ENCODE measurements at regions of chr2 and their contacts with region 1.

Region 1: DNA sequence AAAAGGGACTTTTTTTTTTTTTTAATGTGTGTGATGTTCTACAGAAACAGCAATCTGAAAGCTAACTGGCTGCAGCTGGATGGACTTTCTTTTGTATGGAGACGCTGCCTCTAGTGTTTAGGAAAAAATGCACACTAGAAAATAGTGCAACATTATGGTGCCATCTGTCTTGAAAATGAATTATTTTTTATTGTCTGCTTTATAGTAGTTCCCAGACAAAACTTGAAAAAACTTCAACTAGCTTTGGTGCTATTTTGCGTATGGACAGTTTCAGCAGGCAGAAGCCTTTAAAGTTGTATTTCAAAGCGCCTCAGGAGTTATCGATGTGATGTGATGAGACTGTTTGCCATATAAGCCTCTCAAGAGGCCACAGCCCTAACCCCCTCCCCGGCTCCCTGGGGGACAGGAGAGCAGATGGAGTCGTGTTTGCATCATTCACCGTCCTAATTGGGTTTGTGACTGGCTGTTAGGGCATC is 86.9 kb downstream of the LTBP1 start:
- DNase-seq: no peak
- H3K4me3 ChIP-seq: no peak overlapping the region
- H3K27ac ChIP-seq: no peak overlapping the region
- H3K4me1 ChIP-seq: no peaks in the 10 kb centered on the region
- H3K27me3 ChIP-seq: no peaks in the 10 kb centered on the region
- CTCF ChIP-seq: peak; percentile 69

Region 2: GRCh38 chr2:32553829-32554432 is 479.7 kb before region 1 on chr2:
- CTCF ChIA-PET with region 1: no interaction called
- POLR2A ChIA-PET with region 1: no interaction called
- intact Hi-C with region 1: loop called (anchors 5 kb)
- DNase-seq: no peak
- H3K4me3 ChIP-seq: no peak overlapping the region
- H3K27ac ChIP-seq: no peak overlapping the region
- H3K4me1 ChIP-seq: no peaks in the 10 kb centered on the region
- H3K27me3 ChIP-seq: no peaks in the 10 kb centered on the region
- CTCF ChIP-seq: peak; percentile 85

Region 3: GRCh38 chr2:32946314-32947075 is 87.1 kb before region 1 on chr2 and contains the start of gene LTBP1:
- CTCF ChIA-PET with region 1: no interaction called
- POLR2A ChIA-PET with region 1: no interaction called
- intact Hi-C with region 1: loop called (anchors 1 kb)
- DNase-seq: peak; percentile 62 to 68
- H3K4me3 ChIP-seq: peak within 1 kb of the TSS; percentile 77
- H3K27ac ChIP-seq: no peak within 1 kb of the TSS
- H3K4me1 ChIP-seq: peaks cover 10% of the 10 kb centered on the region
- H3K27me3 ChIP-seq: no peaks in the 10 kb centered on the region
- CTCF ChIP-seq: peak; percentile 88
- total RNA-seq, gene LTBP1: 10.3 and 10.4 TPM in 2 replicates

Region 4: DNA sequence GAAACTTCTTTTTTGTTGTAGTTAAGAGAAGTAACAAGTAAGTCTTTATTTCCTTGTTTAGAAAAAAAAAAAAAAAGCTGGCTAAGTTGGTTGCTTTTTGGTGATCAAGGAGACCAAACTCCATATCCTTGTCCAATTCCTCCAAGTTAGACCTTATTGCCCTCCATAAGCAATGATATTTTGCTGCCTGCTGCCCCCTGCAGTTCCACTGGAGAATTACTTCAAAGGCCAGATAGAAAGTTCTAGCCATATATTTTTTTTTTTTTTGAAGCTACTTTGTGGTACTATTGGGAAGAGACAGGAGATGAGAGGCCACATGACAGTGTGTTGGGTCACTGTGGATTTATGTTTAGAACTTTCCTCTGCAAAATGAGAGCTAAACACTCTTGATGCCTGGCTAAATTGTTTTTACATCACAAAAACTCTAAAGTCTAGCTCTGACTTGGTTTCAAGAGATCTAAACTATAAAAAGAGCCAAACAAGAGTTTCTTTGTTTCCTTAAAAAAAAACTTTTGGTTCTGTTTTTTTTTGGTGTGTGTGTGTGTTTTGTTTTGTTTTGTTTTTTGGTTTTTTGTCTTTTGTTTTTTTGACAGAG is 362.1 kb after region 1 on chr2:
- CTCF ChIA-PET with region 1: interaction called, 3 read pairs
- POLR2A ChIA-PET with region 1: no interaction called
- intact Hi-C with region 1: loop called (anchors 1 kb)
- DNase-seq: peak in 1 of 2 experiments; percentile 53
- H3K4me3 ChIP-seq: no peak overlapping the region
- H3K27ac ChIP-seq: no peak overlapping the region
- H3K4me1 ChIP-seq: no peaks in the 10 kb centered on the region
- H3K27me3 ChIP-seq: no peaks in the 10 kb centered on the region
- CTCF ChIP-seq: peak; percentile 82

Region 5: GRCh38 chr2:33583194-33583938 is 549.7 kb after region 1 on chr2:
- CTCF ChIA-PET with region 1: interaction called, 3 read pairs
- POLR2A ChIA-PET with region 1: no interaction called
- intact Hi-C with region 1: loop called (anchors 5 kb)
- DNase-seq: peak in 1 of 2 experiments; percentile 34
- H3K4me3 ChIP-seq: no peak overlapping the region
- H3K27ac ChIP-seq: no peak overlapping the region
- H3K4me1 ChIP-seq: no peaks in the 10 kb centered on the region
- H3K27me3 ChIP-seq: no peaks in the 10 kb centered on the region
- CTCF ChIP-seq: peak; percentile 91

Measured in PC-9 (cell line).